Posterior vena cava (tissue), 2 donors: ENCODE measurements at regions of chr6 and their contacts with region 1.

Region 1: DNA sequence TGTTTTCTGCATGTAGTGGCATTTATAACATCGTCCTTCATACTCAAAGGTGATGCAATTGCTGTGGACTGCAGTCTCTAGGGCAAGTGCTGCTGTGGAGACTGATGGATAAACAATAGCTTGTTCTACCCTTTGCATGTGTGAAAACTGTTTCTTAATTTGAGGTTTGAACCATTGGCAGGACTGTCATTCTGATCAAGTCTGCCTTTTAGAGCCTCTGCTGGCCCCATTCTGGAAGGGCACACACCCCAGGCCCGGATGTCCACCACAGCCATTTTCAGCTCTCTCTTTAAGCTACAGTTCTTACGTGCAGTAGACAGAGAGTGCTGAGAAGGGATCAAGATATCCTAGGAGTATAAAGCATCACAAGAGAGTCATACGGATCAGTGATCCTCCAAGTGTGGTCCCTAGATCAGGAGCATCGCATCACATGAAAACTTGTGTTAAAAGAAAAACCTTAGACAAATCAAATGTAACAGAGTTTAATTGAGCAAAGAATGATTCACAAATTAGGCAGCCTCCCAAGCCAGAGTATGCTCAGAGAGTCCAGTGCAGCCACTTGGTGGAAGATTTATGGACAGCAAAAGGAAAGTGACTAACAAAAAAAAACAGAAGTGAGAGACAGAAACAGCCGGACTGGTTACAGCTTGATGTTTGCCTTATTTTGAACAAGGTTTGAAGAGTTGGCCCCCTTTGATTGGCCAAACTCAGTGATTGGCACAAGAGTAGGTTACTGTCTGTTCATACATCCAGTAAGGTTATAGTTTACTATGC is 52.0 kb downstream of the FRK start:
- DNase-seq: no peak

Region 2: GRCh38 chr6:114121913-114122645 is 1886.6 kb before region 1 on chr6:
- intact Hi-C with region 1: no loop called
- DNase-seq: no peak

Region 3: DNA sequence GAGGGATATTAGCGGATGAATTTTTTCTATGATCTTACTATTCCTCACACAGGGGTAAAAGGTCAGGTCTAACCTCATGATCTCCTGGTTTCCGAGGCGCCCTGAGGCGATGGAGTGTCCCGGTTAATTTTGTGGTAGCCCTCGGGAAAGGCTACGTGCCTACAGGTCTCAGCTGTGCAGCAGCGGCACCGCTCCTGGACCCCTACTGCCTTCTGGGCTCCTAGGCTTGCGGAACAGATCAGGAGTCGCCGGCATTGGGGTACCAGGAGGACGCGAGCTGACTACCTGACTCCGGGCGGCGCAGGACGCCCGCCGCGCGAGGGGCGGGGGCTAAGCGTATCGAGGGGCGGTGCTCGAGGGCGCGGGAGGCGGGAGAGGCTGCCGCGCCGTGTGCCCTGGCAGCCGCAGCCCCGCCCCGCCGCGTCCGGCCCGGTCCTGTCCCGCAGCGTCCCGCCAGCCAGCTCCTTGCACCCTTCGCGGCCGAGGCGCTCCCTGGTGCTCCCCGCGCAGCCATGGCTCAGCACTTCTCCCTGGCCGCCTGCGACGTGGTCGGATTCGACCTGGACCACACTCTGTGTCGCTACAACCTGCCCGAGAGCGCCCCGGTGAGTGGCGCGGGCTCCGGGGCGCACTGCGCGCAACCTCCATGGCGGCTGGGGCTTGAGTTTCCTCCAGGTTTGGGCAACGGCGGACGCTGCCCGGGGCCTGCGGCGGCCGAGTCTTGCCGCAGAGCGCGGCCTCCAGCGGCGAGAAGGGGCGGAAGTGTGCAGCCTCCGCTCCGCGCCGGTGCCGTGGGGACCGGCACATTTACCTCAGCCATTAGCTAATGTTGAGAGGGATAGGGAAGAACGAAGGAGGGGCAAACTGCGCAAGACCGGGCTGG is 92.0 kb after region 1 on chr6 and contains the start of gene NT5DC1:
- intact Hi-C with region 1: loop called in 1 of 2 experiments (anchors 2 kb)
- DNase-seq: peak; percentile 92
- total RNA-seq, gene NT5DC1: 37.5 to 38.1 TPM